ENCODE measurements at regions of chr3 and their contacts with region 1.

Region 1: DNA sequence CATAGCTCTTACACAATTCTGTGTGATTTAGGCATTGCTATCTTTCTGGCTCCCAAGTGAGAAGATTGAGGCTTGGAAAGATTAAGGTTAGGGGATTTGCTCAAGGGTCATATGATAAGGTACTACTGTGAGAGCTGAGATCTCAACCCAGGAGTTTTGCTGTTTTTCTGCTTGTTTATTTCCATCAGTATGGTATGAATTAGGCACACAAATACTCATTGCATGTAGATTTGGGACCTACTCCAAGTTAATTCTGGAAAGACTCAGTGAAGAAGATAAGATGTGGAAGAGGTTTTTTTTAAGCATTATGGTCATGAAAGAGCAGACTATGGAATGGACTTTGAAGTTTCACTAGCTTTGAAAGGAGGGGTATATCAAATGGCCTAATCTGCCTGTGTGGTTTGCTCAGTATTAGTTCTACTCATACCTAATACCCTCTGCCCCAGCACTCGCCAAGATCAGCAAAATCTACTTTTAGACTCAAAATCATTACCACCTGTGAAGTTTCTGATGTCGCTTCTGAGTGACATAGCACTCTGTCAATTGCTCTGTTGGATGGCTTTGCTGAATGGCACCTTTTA is 12.5 kb downstream of the MBNL1 start:
- DNase-seq: no peak
- ATAC-seq: no peak
- H3K4me3 Mint-ChIP-seq: peak overlapping the region; percentile 8
- H3K27ac Mint-ChIP-seq: peak overlapping the region; percentile 7
- H3K4me1 Mint-ChIP-seq: peaks cover 86% of the 10 kb centered on the region
- H3K27me3 Mint-ChIP-seq: no peaks in the 10 kb centered on the region
- CTCF ChIP-seq: no peak

Region 2: DNA sequence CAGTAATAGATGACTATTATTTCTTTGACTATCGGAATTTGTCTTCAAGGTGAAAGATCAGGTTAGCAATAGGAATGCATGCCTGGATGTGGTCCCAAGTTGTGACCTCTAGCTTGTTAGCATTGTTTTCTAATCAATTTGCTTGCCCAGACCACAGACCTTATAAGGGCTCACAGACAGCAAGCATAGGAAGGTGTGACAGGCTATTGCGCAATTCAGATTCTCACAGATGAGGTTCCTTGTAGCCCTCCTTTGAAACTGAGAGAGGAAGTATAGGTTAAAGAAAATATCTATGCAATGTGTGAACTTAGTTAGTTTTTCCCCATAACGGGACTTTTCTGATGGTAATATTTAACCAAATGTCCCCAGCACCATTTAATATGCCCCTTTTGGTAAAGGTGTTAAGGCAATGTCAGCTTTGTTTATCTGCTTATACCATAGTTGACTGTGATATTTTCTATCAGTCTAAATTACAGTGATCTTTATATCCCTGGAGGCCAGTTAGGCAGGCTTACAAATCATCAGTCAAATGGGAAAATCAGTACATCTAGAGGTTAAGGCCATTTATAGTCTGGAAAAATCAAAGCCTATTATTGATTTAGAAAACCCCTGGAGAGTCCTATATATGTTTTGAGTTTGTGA is 180.6 kb before region 1 on chr3:
- CTCF ChIA-PET with region 1: no interaction called
- POLR2A ChIA-PET with region 1: no interaction called
- intact Hi-C with region 1: no loop called
- DNase-seq: no peak
- ATAC-seq: peak; percentile 25
- H3K4me3 Mint-ChIP-seq: no peak overlapping the region
- H3K27ac Mint-ChIP-seq: no peak overlapping the region
- H3K4me1 Mint-ChIP-seq: peaks cover 9% of the 10 kb centered on the region
- H3K27me3 Mint-ChIP-seq: no peaks in the 10 kb centered on the region
- CTCF ChIP-seq: no peak

Region 3: GRCh38 chr3:152291649-152292066 is 10.4 kb after region 1 on chr3:
- CTCF ChIA-PET with region 1: no interaction called
- POLR2A ChIA-PET with region 1: interaction called, 4 read pairs
- intact Hi-C with region 1: loop called (anchors 1 kb)
- DNase-seq: no peak
- ATAC-seq: peak; percentile 50
- H3K4me3 Mint-ChIP-seq: peak overlapping the region; percentile 5
- H3K27ac Mint-ChIP-seq: peak overlapping the region; percentile 68
- H3K4me1 Mint-ChIP-seq: peaks cover 85% of the 10 kb centered on the region
- H3K27me3 Mint-ChIP-seq: no peaks in the 10 kb centered on the region
- CTCF ChIP-seq: no peak